Cardiac septum (tissue), 1 donor: ENCODE measurements at regions of chr2 and their contacts with region 1.

Region 1: GRCh38 chr2:60998628-60999545 is 18.6 kb upstream of the PEX13 start:
- DNase-seq: no peak

Region 2: DNA sequence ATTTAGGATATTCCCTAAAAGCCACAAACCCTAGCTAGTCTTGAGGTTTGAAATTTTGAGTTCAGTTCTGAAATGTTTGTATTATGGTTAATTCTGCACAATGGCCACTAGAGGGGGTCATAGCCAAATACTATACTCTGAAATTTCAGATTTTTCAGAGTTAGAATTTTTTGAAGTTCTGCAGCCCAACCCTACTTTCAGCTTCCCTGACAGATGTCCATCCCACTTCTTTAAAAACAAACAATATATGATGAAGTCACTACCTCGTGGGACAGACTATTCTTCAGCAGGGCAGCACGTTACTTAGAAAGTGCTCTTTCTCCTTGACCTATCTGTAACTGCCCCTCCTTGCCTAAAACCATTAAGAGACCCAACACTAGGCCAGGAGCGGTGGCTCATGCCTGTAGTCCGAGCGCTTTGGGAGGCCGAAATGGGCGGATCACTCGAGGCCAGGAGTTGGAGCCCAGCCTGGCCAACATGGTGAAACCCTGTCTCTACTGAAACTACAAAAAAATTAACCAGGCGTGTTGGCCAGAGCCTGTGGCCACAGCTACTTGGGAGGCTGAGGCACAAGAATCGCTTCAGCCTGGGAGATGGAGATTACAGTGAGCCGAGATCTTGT is 291.0 kb before region 1 on chr2:
- intact Hi-C with region 1: loop called (anchors 2 kb)
- DNase-seq: no peak

Region 3: DNA sequence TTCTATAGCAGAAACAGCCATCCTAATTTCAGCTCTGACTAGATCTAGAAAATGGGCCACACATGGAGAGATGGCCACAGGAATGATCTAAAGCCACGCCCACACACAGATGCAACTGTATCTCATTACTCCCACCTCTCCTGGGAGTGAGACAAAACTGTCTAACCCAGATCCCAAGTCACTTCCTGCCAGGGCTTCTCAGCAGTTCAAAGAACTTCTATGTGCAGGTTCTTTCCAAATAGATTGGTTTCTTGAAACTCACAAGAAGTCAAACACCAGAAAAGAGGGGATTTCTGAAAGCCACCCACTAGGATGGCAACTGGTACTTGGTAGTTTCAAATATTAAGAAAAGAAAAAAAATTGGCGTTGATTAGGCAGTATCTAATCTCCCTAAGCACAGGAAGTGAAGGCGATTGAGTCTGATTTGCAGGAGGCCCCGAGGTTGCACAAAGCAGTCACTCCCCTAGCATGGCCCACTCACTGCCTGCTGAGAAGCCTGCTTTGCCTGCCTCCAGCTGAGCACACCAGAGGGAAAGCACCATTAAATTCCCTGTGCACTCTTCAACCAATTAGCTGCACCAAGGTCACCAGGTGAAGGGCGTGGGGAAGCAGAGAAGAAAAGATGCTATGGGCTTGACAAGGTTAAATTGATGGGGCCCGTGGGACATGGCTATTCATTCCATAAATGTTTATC is 191.8 kb before region 1 on chr2:
- intact Hi-C with region 1: loop called (anchors 5 kb)
- DNase-seq: no peak

Region 4: DNA sequence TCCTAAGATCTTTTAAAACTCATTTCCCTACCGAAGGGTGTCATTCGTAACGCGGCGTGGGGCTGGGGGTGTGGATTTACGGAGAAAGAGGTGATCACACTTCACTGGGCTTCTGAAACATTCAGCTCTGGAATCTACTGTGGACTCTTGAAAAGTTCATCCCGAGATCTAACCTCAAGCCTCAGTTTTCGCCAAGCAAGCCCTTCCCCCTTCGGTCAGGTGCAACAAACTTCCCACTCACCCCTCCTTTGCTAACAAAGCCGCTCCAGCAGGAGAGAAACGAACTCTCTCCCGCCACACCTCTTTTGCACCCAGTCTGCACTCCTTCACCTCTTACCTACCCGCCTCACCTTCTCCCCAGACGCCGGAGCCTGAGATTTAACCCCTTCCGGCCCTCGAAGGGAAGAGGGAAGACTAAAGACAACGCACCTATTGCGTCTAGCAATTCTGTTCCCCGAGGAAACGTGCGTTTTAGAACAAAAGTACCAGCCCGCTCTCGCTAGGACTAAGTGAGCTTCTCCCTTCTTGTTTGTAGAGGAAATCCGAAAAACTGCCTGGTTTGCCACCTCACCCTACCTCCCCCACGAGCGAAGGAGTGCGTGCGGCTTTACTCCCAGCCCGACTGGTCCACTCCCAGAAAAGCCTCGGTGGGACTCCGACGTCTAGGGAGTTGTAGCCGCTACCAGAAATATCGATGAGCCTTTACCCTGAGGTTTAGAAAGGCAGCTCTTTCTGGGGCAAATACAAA is 18.1 kb after region 1 on chr2:
- intact Hi-C with region 1: no loop called
- DNase-seq: peak; percentile 91